Heart left ventricle (tissue), 16 donors: ENCODE measurements at regions of chr3 and their contacts with region 1.

Region 1: DNA sequence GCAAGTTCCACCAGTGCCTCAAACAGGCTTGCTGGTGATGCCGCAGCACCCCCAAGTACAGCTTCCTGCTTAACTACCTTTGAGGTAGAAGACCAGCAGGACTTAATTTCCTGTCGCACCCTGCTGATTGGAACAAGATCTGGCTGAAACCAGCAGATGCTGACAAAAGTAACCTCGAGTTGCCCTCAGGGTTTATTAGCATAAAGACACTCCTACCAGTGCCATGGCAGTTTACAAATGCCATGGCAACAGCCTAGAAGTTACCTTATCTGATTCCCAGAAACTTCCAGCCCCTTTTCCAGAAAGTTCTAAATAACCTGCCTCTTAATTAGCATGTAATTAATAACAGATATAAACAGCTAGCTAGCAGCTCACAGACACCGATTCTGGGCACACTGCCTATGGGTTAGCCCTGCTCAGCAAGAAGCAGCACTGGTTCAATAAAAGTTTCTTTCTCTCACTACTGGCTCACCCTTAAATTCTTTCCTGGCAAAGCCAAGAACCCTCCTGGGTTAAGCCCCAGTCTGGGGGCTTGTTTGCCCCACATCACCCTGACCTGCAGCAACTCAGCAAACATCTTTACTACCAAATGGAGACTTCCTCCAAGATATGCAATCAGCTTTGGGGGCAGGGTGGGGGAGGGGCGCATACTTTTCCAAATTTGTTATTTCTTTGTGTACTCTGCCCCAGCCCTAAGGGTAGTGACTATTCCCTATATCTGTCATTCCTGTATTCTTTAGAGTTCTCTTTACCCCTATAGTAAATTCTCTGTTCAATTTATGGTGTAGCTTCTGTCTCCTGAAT is 54.2 kb downstream of the MAP4 start:
- DNase-seq: no peak
- ATAC-seq: no peak
- H3K4me3 ChIP-seq: no peak overlapping the region
- H3K27ac ChIP-seq: no peak overlapping the region
- H3K4me1 ChIP-seq: peaks cover 6 to 49% (median 26%) of the 10 kb centered on the region in 12 donors
- H3K27me3 ChIP-seq: no peaks in the 10 kb centered on the region
- CTCF ChIP-seq: no peak
- POLR2A ChIP-seq: no peak

Region 2: GRCh38 chr3:47762233-47762632 is 199.8 kb before region 1 on chr3:
- intact Hi-C with region 1: no loop called
- DNase-seq: no peak
- ATAC-seq: peak in 3 of 4 donors; percentile 61 to 80 (median 77)
- H3K4me3 ChIP-seq: no peak overlapping the region
- H3K27ac ChIP-seq: no peak overlapping the region
- H3K4me1 ChIP-seq: peaks cover 0 to 10% (median 0%) of the 10 kb centered on the region in 12 donors
- H3K27me3 ChIP-seq: no peaks in the 10 kb centered on the region
- CTCF ChIP-seq: no peak
- POLR2A ChIP-seq: no peak

Region 3: GRCh38 chr3:47910777-47911440 is 51.1 kb before region 1 on chr3:
- intact Hi-C with region 1: loop called in 1 of 10 experiments (anchors 10 kb)
- DNase-seq: no peak
- ATAC-seq: peak in 3 of 4 donors; percentile 8 to 61 (median 58)
- H3K4me3 ChIP-seq: no peak overlapping the region
- H3K27ac ChIP-seq: peak overlapping the region in 1 of 12 donors; percentile 30
- H3K4me1 ChIP-seq: peaks cover 0 to 22% (median 4%) of the 10 kb centered on the region in 12 donors
- H3K27me3 ChIP-seq: no peaks in the 10 kb centered on the region
- CTCF ChIP-seq: no peak
- POLR2A ChIP-seq: no peak